ENCODE measurements at regions of chr9 and their contacts with region 1.

Region 1: DNA sequence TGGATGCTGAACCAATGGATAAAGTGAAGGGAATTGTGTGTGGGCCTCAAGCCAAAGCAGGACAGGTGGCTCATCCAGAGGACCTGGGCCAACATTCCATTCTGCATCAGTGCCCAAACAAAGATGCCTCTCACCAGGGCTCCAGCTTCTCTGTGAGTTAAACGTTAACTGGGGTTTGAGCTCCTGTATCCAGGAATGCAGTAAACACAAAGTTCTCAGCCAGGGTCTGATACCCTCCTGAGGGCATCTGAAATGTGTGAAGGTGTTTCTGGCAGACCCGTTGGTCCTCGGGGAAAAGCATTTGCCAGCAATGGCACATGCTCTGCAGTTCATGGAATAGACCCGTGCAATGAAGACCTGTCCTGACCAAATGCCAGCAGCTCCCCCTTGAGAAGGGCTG is 33.9 kb upstream of the AOPEP start:
- DNase-seq: peak in 1 of 7 donors; percentile 33
- H3K4me3 ChIP-seq: no peak overlapping the region
- H3K27ac ChIP-seq: no peak overlapping the region
- H3K4me1 ChIP-seq: no peaks in the 10 kb centered on the region
- H3K27me3 ChIP-seq: no peaks in the 10 kb centered on the region
- CTCF ChIP-seq: no peak
- POLR2A ChIP-seq: no peak

Region 2: DNA sequence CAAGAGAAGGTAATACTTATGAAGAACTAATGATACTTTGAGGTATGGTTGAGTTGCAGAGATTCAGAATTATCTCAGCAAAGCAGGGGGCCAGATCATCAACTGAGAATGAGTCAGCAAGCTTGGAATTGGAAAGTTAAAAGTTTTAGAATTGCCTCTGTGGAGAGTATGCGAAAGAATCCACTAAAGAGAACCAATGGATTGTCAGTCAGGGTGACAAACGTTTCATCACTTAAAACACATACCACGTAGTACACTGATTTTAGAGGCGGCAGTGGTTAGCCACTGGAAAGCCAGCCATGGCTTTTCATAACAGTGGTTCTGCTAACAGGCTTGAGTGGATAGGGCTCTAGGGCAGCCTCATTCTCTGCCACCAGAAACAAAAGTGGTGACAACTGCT is 64.6 kb after region 1 on chr9:
- intact Hi-C with region 1: loop called in 1 of 2 experiments (anchors 5 kb)
- DNase-seq: no peak
- H3K4me3 ChIP-seq: no peak overlapping the region
- H3K27ac ChIP-seq: no peak overlapping the region
- H3K4me1 ChIP-seq: peaks cover 0 to 14% of the 10 kb centered on the region in 2 donors
- H3K27me3 ChIP-seq: no peaks in the 10 kb centered on the region
- CTCF ChIP-seq: no peak
- POLR2A ChIP-seq: no peak

Measured in adrenal gland (tissue), 19 donors.